Left cardiac atrium (tissue), 4 donors: ENCODE measurements at regions of chr16 and their contacts with region 1.

Region 1: DNA sequence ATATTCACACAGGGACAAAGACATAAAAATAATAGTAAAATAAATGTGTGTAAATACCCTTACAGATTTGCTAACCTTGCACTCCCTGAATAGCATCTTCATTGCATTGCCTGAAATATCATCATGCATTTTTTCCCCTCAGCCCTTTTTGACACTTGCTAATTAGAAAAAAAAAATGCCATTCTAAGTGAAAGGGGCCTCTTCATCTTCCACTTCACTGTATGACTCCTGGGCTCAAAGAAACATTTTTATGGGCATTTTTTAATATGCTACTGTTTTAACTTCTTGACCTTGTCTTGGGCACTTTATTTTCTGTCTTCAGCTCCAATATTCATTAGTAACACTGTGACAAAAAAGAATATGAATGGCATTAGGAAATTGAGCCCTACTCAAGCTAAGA is 1424.4 kb downstream of the CDH8 start:
- DNase-seq: no peak
- ATAC-seq: no peak

Region 2: GRCh38 chr16:61581417-61582046 is 969.7 kb after region 1 on chr16:
- intact Hi-C with region 1: loop called in 1 of 2 experiments (anchors 10 kb)
- DNase-seq: no peak
- ATAC-seq: no peak